Heart right ventricle (tissue), 16 donors: ENCODE measurements at regions of chr17 and their contacts with region 1.

Region 1: DNA sequence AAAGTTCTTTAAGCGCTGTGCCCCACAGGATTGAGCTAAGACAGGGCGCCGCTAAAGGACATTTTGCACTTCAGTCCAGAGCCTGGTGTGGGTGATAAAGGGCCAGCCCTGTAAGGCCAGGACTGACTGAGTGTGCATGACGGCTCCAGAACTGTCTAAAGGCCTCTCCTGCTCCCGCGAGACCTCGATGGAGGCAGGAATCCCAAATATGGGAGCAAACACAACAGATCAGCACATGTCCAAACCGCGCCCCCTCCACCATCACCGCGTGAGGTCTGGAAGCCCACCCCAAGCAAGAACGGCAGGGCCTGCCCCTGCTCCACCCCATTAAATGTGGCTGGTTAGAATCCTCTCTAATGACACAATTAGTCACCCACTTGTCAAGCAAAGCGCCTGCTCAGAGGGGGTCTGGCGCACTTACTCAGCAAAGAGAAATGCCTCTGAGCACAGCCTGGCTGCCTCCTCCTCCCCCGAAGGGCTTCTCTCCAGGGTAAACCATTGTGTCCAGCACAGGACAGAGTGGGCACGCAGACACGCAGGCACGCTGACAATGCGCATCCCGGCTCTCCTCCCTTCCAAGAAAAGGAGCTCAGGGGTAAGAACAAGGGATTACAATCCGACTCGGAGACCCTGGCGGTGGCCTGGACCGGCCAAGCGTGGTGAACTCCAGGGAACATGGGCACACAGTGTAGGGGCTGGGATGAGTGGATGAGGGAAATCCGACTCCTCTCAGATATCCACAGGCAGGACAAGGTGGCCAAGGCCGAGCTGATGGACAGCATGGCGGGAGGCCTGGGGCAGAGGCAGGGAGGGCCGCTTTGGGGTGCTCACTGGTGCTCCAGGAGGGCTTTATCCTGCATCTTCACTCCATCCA is 1.5 kb downstream of the MXRA7 start:
- DNase-seq: peak; percentile 82 to 91
- ATAC-seq: peak; percentile 77 to 90 (median 84)
- H3K4me3 ChIP-seq: peak overlapping the region; percentile 59 to 85 (median 79)
- H3K27ac ChIP-seq: peak overlapping the region; percentile 89 to 98 (median 94)
- H3K4me1 ChIP-seq: peaks cover 9 to 83% (median 58%) of the 10 kb centered on the region in 9 donors
- H3K27me3 ChIP-seq: no peaks in the 10 kb centered on the region
- CTCF ChIP-seq: no peak

Region 2: DNA sequence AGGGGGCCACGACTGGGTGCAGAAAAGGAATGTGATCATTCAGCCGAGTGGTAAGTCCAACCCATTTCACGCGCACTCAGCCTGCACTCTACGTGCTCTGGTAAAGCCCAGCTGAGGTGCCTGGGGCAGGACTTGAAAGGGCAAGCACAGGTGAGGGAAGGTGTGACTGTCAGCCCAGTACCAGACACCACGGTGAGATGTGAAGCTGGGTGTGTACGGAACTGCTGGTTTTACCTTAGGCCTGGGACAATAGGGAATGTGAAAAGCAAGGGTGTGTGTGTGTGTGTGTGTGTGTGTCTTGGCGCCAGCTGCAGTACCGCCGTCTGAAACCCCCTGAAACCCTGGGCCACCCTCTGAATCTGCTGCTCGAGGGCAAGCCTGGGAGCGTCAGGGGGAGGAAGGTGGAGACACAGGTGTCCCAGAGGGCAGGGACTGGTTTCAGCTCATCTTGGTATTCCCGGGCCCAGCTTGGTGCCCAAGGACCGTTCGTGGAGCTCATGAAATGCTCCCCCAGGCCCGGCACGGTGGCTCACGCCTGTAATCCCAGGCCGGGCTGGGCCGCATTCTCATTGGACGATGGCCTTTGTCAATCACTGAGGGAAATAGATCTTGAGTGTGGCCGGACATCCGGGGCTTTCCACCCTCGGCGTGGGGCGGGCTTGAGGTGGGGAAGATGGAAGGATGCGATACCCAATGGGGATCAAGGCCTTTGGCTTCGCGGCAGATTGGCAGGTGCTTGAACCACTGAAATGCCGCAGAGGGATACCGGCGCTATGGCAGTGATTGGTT is 38.0 kb before region 1 on chr17:
- intact Hi-C with region 1: loop called in 5 of 10 experiments (anchors 5 kb)
- DNase-seq: peak; percentile 99 to 100
- ATAC-seq: peak; percentile 96 to 99 (median 98)
- H3K4me3 ChIP-seq: peak overlapping the region; percentile 29 to 92 (median 64)
- H3K27ac ChIP-seq: peak overlapping the region; percentile 70 to 95 (median 89)
- H3K4me1 ChIP-seq: peaks cover 3 to 26% (median 21%) of the 10 kb centered on the region in 9 donors
- H3K27me3 ChIP-seq: no peaks in the 10 kb centered on the region
- CTCF ChIP-seq: no peak

Region 3: DNA sequence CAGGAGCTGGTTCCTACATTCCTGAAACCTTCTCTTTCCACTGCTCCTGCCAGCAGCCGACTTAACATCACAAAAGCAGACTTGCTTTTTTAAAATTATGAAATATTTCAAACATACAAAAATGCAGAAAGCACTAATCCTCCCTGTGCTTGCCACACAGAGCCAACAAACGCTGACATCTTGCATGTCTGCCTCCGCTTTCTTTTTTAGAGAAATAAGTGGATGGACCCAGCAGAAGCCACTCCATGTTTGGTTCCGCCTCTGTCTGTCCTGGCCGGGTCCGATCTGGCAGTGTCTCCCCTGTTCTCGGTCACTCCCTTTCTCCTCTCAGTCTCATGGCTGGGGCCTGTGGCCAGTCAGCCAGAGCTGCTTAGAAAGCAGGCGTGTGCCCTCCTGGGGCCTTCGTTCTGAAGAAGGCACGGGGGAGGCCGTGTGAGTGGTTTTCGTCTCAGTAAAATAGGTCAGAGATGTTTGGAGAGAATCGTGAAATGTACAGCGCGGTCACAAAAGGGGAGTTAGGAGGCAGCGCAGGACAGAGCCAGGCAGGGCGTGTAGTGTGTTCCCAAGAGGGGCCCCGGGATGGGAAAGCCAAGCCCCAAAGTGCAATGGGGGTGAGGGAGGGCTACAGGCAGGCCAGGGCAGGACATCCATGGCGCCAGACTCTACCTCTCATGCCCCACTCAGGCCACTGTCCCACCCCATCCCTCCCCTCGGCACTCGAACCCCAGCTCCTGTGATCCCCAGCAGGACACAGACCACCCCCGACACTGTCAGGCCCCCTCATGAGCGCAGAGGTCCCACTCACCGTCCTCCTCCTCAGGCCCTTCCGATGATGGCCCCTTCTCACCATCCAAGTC is 21.8 kb before region 1 on chr17:
- intact Hi-C with region 1: loop called in 2 of 10 experiments (anchors 2 kb)
- DNase-seq: peak; percentile 62 to 69
- ATAC-seq: peak; percentile 34 to 53 (median 48)
- H3K4me3 ChIP-seq: peak overlapping the region in 1 of 10 donors; percentile 13
- H3K27ac ChIP-seq: peak overlapping the region; percentile 87 to 99 (median 94)
- H3K4me1 ChIP-seq: peaks cover 56 to 100% (median 97%) of the 10 kb centered on the region in 9 donors
- H3K27me3 ChIP-seq: no peaks in the 10 kb centered on the region
- CTCF ChIP-seq: no peak